Heart right ventricle (tissue), 16 donors: ENCODE measurements at regions of chr1 and their contacts with region 1.

Region 1: DNA sequence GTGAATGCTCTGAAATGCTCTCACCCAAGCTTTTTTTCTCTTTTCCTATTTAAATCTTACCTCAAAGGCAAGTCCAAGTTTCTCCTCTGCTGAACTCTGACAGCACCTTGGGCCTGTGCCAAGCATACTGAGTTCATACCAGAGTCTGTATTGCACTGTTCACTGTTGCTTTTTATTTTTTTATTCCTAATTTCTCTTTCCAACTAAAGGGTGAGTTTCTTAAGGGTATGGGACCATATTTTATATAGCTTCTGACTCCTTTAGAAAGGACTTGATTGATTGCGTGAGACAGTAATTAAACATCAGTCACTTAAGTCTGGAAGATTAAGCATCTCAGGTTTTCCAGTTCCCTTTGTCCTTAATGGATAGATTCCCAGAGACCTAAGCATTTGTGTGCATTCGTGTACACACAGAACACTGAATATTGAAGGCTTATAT is 69.9 kb downstream of the CACHD1 start:
- DNase-seq: peak; percentile 58 to 85
- ATAC-seq: peak in 6 of 8 donors; percentile 54 to 75 (median 62)
- H3K4me3 ChIP-seq: peak overlapping the region in 8 of 10 donors; percentile 11 to 45 (median 30)
- H3K27ac ChIP-seq: peak overlapping the region in 9 of 10 donors; percentile 35 to 75 (median 67)
- H3K4me1 ChIP-seq: peaks cover 7 to 81% (median 34%) of the 10 kb centered on the region in 9 donors
- H3K27me3 ChIP-seq: no peaks in the 10 kb centered on the region
- CTCF ChIP-seq: no peak

Region 2: GRCh38 chr1:64476251-64476952 is 63.4 kb before region 1 on chr1:
- intact Hi-C with region 1: loop called in 5 of 10 experiments (anchors 5 to 10 kb)
- DNase-seq: peak in 1 of 2 donors; percentile 56
- ATAC-seq: peak; percentile 85 to 93 (median 89)
- H3K4me3 ChIP-seq: no peak overlapping the region
- H3K27ac ChIP-seq: peak overlapping the region in 6 of 10 donors; percentile 1 to 53 (median 40)
- H3K4me1 ChIP-seq: peaks cover 5 to 83% (median 43%) of the 10 kb centered on the region in 9 donors
- H3K27me3 ChIP-seq: peaks cover 0 to 16% (median 0%) of the 10 kb centered on the region in 7 donors
- CTCF ChIP-seq: no peak

Region 3: GRCh38 chr1:64514197-64514765 is 25.5 kb before region 1 on chr1:
- intact Hi-C with region 1: loop called in 1 of 10 experiments (anchors 2 kb)
- DNase-seq: no peak
- ATAC-seq: peak in 7 of 8 donors; percentile 6 to 59 (median 34)
- H3K4me3 ChIP-seq: peak overlapping the region in 5 of 10 donors; percentile 3 to 12 (median 8)
- H3K27ac ChIP-seq: peak overlapping the region; percentile 29 to 77 (median 62)
- H3K4me1 ChIP-seq: peaks cover 0 to 81% (median 63%) of the 10 kb centered on the region in 9 donors
- H3K27me3 ChIP-seq: no peaks in the 10 kb centered on the region
- CTCF ChIP-seq: no peak

Region 4: DNA sequence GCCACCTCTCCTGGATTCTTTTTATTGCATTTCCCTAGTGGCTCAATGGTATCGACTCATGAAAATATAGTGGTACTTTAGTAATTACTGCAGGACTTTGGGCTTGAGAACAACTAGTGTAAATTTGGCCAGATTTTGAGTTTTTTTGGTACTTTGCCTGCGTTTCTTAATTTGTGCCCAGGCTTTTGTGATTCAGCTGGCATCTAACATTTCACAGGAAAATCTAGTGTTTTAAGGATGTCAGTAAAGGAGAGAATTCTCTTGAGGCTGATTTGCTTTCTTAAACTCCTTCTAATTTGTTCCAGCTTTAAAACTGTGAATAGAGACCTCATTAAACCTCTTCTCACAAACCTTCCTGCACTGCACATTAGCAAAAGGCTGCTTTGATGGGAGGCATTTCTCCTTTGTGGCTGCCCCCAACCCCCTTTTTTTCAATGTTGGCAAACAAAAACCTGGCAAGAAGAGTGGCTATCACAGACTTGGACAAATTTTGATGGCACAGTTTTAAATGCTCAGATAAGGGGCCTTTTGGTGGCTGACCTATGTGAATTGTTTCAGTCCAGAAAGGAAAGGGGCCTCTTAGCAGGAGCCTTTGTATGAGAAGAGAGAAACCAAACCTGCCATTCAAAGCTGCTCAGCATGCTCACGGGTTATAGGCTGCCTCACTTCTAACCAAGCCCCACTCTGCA is 91.7 kb after region 1 on chr1:
- intact Hi-C with region 1: loop called in 1 of 10 experiments (anchors 10 kb)
- DNase-seq: no peak
- ATAC-seq: no peak
- H3K4me3 ChIP-seq: no peak overlapping the region
- H3K27ac ChIP-seq: no peak overlapping the region
- H3K4me1 ChIP-seq: peaks cover 0 to 42% (median 7%) of the 10 kb centered on the region in 9 donors
- H3K27me3 ChIP-seq: no peaks in the 10 kb centered on the region
- CTCF ChIP-seq: no peak